Lower lobe of right lung (tissue), 2 donors: ENCODE measurements at regions of chr14 and their contacts with region 1.

Region 1: DNA sequence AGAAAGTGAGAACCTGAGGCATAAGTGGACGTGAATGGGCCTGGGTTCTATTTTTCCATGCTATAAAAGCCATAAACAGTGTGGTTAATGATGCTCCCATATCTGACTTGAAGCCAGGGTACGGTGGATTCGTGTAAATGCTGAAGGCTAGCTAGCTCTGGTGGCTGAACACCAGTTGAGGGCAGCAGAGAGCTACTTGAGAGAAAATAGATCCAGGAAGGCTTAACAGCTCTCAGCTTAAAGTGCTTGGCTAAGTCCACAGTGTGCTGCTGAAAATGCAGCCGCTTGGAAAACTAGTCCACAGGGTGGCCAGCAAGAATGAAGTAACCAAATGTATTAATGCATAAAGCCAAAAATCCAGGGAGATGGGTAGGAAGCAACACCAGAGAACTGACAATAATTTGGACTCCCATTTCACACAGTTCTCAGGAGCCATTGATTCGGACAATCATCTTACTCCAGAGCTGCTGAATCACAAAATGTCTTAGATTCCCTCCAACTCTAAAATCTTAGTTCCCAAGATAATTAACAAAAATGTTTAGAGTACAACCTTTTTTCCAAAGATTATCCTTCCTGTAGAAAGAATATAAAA is 15.0 kb upstream of the FOXG1 start:
- DNase-seq: no peak
- ATAC-seq: peak; percentile 75 to 86
- H3K4me3 ChIP-seq: no peak overlapping the region
- H3K27ac ChIP-seq: no peak overlapping the region
- H3K4me1 ChIP-seq: no peaks in the 10 kb centered on the region
- H3K27me3 ChIP-seq: peaks cover 34% of the 10 kb centered on the region
- CTCF ChIP-seq: peak; percentile 47

Region 2: GRCh38 chr14:29536886-29537511 is 785.4 kb after region 1 on chr14:
- intact Hi-C with region 1: loop called (anchors 10 kb)
- DNase-seq: no peak
- ATAC-seq: no peak
- H3K4me3 ChIP-seq: no peak overlapping the region
- H3K27ac ChIP-seq: no peak overlapping the region
- H3K4me1 ChIP-seq: no peaks in the 10 kb centered on the region
- H3K27me3 ChIP-seq: no peaks in the 10 kb centered on the region
- CTCF ChIP-seq: peak; percentile 38